ENCODE measurements at regions of chr19 and their contacts with region 1.

Region 1: GRCh38 chr19:14472202-14472938 is 2.8 kb downstream of the PTGER1 start:
- DNase-seq: peak; percentile 87
- ATAC-seq: peak; percentile 83
- H3K4me3 ChIP-seq: peak overlapping the region in 3 of 5 experiments; percentile 24 to 46 (median 38)
- H3K4me3 Mint-ChIP-seq: peak overlapping the region; percentile 61
- H3K27ac ChIP-seq: no peak overlapping the region
- H3K27ac Mint-ChIP-seq: no peak overlapping the region
- H3K4me1 ChIP-seq: peaks cover 21 to 27% of the 10 kb centered on the region in 2 donors
- H3K4me1 Mint-ChIP-seq: peaks cover 27% of the 10 kb centered on the region
- H3K27me3 ChIP-seq: peaks cover 0 to 28% (median 14%) of the 10 kb centered on the region in 4 experiments
- H3K27me3 Mint-ChIP-seq: peaks cover 28% of the 10 kb centered on the region
- CTCF ChIP-seq: peak; percentile 99

Region 2: GRCh38 chr19:14337510-14337909 is 134.9 kb before region 1 on chr19:
- CTCF ChIA-PET with region 1: no interaction called
- POLR2A ChIA-PET with region 1: no interaction called
- intact Hi-C with region 1: no loop called
- DNase-seq: peak; percentile 51
- ATAC-seq: peak; percentile 54
- H3K4me3 ChIP-seq: no peak overlapping the region
- H3K4me3 Mint-ChIP-seq: no peak overlapping the region
- H3K27ac ChIP-seq: no peak overlapping the region
- H3K27ac Mint-ChIP-seq: no peak overlapping the region
- H3K4me1 ChIP-seq: peaks cover 6 to 7% of the 10 kb centered on the region in 2 donors
- H3K4me1 Mint-ChIP-seq: peaks cover 5% of the 10 kb centered on the region
- H3K27me3 ChIP-seq: peaks cover 0 to 3% (median 0%) of the 10 kb centered on the region in 4 experiments
- H3K27me3 Mint-ChIP-seq: no peaks in the 10 kb centered on the region
- CTCF ChIP-seq: no peak

Region 3: GRCh38 chr19:14432791-14433553 is 39.4 kb before region 1 on chr19 and contains the start of gene PKN1:
- CTCF ChIA-PET with region 1: interaction called, 12 read pairs
- POLR2A ChIA-PET with region 1: interaction called, 3 read pairs
- intact Hi-C with region 1: loop called (anchors 1 kb)
- DNase-seq: peak; percentile 73
- ATAC-seq: peak; percentile 66
- H3K4me3 ChIP-seq: peak within 1 kb of the TSS; percentile 14 to 81 (median 77)
- H3K4me3 Mint-ChIP-seq: peak within 1 kb of the TSS; percentile 89
- H3K27ac ChIP-seq: peak within 1 kb of the TSS; percentile 76 to 86
- H3K27ac Mint-ChIP-seq: peak within 1 kb of the TSS; percentile 90
- H3K4me1 ChIP-seq: peaks cover 20 to 28% of the 10 kb centered on the region in 2 donors
- H3K4me1 Mint-ChIP-seq: peaks cover 31% of the 10 kb centered on the region
- H3K27me3 ChIP-seq: peaks cover 0 to 3% (median 0%) of the 10 kb centered on the region in 4 experiments
- H3K27me3 Mint-ChIP-seq: no peaks in the 10 kb centered on the region
- CTCF ChIP-seq: no peak
- total RNA-seq, gene PKN1: 170 and 171 TPM in 2 replicates